Left ventricle myocardium inferior (tissue), 1 donor: ENCODE measurements at regions of chr7 and their contacts with region 1.

Region 1: DNA sequence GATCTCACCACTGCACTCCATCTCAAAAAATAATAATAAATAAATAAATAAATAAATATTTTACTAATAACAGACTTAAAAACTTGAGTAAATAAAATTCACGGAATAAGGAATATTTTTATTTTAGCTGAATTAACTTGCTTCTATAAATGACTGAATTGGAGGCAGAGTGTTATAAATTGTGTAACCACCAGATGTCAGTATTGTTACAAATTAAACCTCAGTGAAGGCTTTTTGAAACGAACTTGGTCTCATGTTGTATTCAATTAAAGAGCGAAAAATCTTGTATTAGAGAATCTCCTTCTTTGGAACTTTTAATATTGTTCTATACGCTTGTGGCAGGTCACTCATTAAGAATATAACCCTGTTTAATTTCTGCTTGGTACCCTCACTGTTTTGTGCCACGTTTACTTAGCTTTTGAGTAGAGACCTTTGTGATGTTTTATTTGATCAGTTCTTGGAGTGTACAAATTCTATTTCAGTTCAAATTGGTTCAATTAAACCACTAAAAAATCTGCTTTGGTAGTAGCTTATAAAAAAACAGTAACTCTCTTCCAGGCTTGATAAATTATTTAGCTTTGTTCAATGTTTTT is 45.6 kb upstream of the SCIN start:
- DNase-seq: no peak
- H3K4me3 ChIP-seq: no peak overlapping the region
- H3K27ac ChIP-seq: no peak overlapping the region
- H3K4me1 ChIP-seq: no peaks in the 10 kb centered on the region
- H3K27me3 ChIP-seq: peaks cover 8% of the 10 kb centered on the region
- CTCF ChIP-seq: peak; percentile 78

Region 2: DNA sequence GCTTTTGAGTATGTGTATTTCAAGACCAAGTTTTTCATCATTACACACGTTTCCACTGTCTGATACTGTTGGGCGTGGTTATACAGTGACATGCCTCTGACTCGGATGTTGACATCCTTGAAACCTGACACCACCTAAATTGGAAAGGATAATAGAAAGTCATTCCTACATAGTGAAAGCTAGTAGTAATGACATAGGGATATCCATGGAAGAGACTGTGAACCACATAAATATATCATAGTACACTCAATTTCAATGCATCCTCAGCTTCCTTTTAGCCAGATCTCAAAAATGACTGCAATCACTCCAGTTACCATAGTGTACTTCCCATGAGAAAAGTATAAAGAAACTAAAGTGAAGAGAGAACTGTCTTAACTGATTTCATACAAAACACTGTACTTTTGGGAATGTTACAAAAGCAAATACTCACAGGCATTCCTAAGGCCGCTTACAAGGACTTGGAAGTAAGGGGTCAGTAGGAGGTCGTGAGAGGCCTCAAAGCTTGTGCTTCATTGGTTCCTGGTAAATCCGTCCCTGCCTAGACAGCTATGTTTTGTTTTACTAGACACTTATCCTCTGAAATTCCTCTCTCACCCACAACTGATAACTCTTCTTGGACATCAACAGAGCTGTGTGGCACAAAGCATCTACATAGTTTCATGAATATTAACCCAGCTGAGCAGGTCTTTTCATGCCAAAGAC is 49.4 kb before region 1 on chr7:
- intact Hi-C with region 1: no loop called
- DNase-seq: no peak
- H3K4me3 ChIP-seq: no peak overlapping the region
- H3K27ac ChIP-seq: no peak overlapping the region
- H3K4me1 ChIP-seq: no peaks in the 10 kb centered on the region
- H3K27me3 ChIP-seq: no peaks in the 10 kb centered on the region
- CTCF ChIP-seq: no peak

Region 3: GRCh38 chr7:12623897-12624498 is 99.1 kb after region 1 on chr7:
- intact Hi-C with region 1: loop called (anchors 10 kb)
- DNase-seq: no peak
- H3K4me3 ChIP-seq: no peak overlapping the region
- H3K27ac ChIP-seq: no peak overlapping the region
- H3K4me1 ChIP-seq: no peaks in the 10 kb centered on the region
- H3K27me3 ChIP-seq: no peaks in the 10 kb centered on the region
- CTCF ChIP-seq: peak; percentile 77